HepG2 (cell line): ENCODE measurements at regions of chr1 and their contacts with region 1.

Region 1: GRCh38 chr1:218361298-218362065 is 16.3 kb downstream of the TGFB2 start:
- DNase-seq: peak; percentile 66
- ATAC-seq: peak; percentile 92
- H3K4me3 ChIP-seq: no peak overlapping the region
- H3K27ac ChIP-seq: no peak overlapping the region
- H3K4me1 ChIP-seq: peaks cover 27% of the 10 kb centered on the region
- H3K27me3 ChIP-seq: no peaks in the 10 kb centered on the region
- CTCF ChIP-seq: peak; percentile 82
- EP300 ChIP-seq: no peak
- POLR2A ChIP-seq: no peak
- RAD21 ChIP-seq: peak; percentile 74

Region 2: GRCh38 chr1:218521375-218522169 is 160.1 kb after region 1 on chr1:
- CTCF ChIA-PET with region 1: interaction called, 23 read pairs
- POLR2A ChIA-PET with region 1: no interaction called
- in situ Hi-C with region 1: loop called (anchors 5 kb)
- intact Hi-C with region 1: loop called (anchors 1 kb)
- DNase-seq: peak; percentile 45
- ATAC-seq: peak; percentile 81
- H3K4me3 ChIP-seq: no peak overlapping the region
- H3K27ac ChIP-seq: no peak overlapping the region
- H3K4me1 ChIP-seq: no peaks in the 10 kb centered on the region
- H3K27me3 ChIP-seq: no peaks in the 10 kb centered on the region
- CTCF ChIP-seq: peak; percentile 79
- EP300 ChIP-seq: no peak
- POLR2A ChIP-seq: no peak
- RAD21 ChIP-seq: no peak

Region 3: GRCh38 chr1:218553203-218553602 is 191.7 kb after region 1 on chr1:
- CTCF ChIA-PET with region 1: no interaction called
- POLR2A ChIA-PET with region 1: no interaction called
- in situ Hi-C with region 1: no loop called
- intact Hi-C with region 1: loop called (anchors 1 kb)
- DNase-seq: no peak
- ATAC-seq: no peak; the same call in 2 of the 3 replicates
- H3K4me3 ChIP-seq: no peak overlapping the region
- H3K27ac ChIP-seq: no peak overlapping the region
- H3K4me1 ChIP-seq: no peaks in the 10 kb centered on the region
- H3K27me3 ChIP-seq: no peaks in the 10 kb centered on the region
- CTCF ChIP-seq: peak; percentile 45
- EP300 ChIP-seq: no peak
- POLR2A ChIP-seq: no peak
- RAD21 ChIP-seq: no peak